IMR-90 (cell line): ENCODE measurements at regions of chr18 and their contacts with region 1.

Region 1: DNA sequence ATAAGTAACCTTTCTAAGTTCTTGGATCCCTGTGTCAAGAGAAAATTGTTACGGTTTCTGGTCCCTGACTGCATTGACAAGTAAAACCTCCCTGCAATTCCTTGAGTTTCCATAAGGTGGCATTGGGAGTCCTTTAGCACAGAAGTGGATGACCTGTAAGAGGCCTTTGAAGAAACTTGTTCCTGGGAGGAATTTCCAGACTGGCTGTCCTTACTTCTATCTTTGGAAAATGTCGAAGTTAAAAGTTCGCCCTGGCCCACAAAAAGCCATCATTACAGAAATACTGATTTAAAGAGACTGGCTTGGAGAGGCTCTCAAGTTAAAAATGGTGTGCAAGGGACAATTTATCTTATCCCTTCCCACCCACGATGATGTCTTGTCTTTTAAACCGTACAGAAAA is 218.4 kb downstream of the CDH20 start:
- DNase-seq: peak; percentile 88
- ATAC-seq: peak; percentile 98
- H3K4me3 ChIP-seq: no peak overlapping the region
- H3K27ac ChIP-seq: no peak overlapping the region
- H3K4me1 ChIP-seq: no peaks in the 10 kb centered on the region
- H3K27me3 ChIP-seq: no peaks in the 10 kb centered on the region
- CTCF ChIP-seq: peak; percentile 86
- POLR2A ChIP-seq: no peak
- RAD21 ChIP-seq: peak; percentile 88

Region 2: GRCh38 chr18:61606759-61607158 is 55.2 kb after region 1 on chr18:
- CTCF ChIA-PET with region 1: no interaction called
- POLR2A ChIA-PET with region 1: no interaction called
- dilution Hi-C with region 1: no loop called
- in situ Hi-C with region 1: no loop called
- intact Hi-C with region 1: no loop called
- DNase-seq: peak; percentile 93
- ATAC-seq: peak; percentile 65
- H3K4me3 ChIP-seq: peak overlapping the region; percentile 43
- H3K27ac ChIP-seq: peak overlapping the region; percentile 82
- H3K4me1 ChIP-seq: peaks cover 14% of the 10 kb centered on the region
- H3K27me3 ChIP-seq: no peaks in the 10 kb centered on the region
- CTCF ChIP-seq: no peak
- POLR2A ChIP-seq: no peak; the same call in 1 of the 2 replicates
- RAD21 ChIP-seq: no peak

Region 3: GRCh38 chr18:61893971-61894750 is 342.6 kb after region 1 on chr18:
- CTCF ChIA-PET with region 1: no interaction called
- POLR2A ChIA-PET with region 1: no interaction called
- dilution Hi-C with region 1: no loop called
- in situ Hi-C with region 1: no loop called
- intact Hi-C with region 1: loop called (anchors 1 kb)
- DNase-seq: peak; percentile 64
- ATAC-seq: peak; percentile 93
- H3K4me3 ChIP-seq: peak overlapping the region; percentile 95
- H3K27ac ChIP-seq: peak overlapping the region; percentile 74
- H3K4me1 ChIP-seq: peaks cover 7% of the 10 kb centered on the region
- H3K27me3 ChIP-seq: no peaks in the 10 kb centered on the region
- CTCF ChIP-seq: peak; percentile 54
- POLR2A ChIP-seq: peak; percentile 76
- RAD21 ChIP-seq: peak; percentile 60

Region 4: GRCh38 chr18:62209046-62209445 is 657.5 kb after region 1 on chr18:
- CTCF ChIA-PET with region 1: interaction called, 14 read pairs
- POLR2A ChIA-PET with region 1: no interaction called
- dilution Hi-C with region 1: no loop called
- in situ Hi-C with region 1: no loop called
- intact Hi-C with region 1: no loop called
- DNase-seq: no peak
- ATAC-seq: no peak
- H3K4me3 ChIP-seq: no peak overlapping the region
- H3K27ac ChIP-seq: no peak overlapping the region
- H3K4me1 ChIP-seq: no peaks in the 10 kb centered on the region
- H3K27me3 ChIP-seq: no peaks in the 10 kb centered on the region
- CTCF ChIP-seq: no peak
- POLR2A ChIP-seq: no peak
- RAD21 ChIP-seq: no peak